AG04449 (cell line): ENCODE measurements at regions of chr5 and their contacts with region 1.

Region 1: GRCh38 chr5:169695919-169696490 is 58.9 kb downstream of the DOCK2 start:
- DNase-seq: peak; percentile 98
- H3K4me3 ChIP-seq: no peak overlapping the region
- CTCF ChIP-seq: no peak

Region 2: GRCh38 chr5:169656125-169656901 is 39.7 kb before region 1 on chr5:
- CTCF ChIA-PET with region 1: no interaction called
- POLR2A ChIA-PET with region 1: no interaction called
- DNase-seq: no peak
- H3K4me3 ChIP-seq: no peak overlapping the region
- CTCF ChIP-seq: no peak

Region 3: DNA sequence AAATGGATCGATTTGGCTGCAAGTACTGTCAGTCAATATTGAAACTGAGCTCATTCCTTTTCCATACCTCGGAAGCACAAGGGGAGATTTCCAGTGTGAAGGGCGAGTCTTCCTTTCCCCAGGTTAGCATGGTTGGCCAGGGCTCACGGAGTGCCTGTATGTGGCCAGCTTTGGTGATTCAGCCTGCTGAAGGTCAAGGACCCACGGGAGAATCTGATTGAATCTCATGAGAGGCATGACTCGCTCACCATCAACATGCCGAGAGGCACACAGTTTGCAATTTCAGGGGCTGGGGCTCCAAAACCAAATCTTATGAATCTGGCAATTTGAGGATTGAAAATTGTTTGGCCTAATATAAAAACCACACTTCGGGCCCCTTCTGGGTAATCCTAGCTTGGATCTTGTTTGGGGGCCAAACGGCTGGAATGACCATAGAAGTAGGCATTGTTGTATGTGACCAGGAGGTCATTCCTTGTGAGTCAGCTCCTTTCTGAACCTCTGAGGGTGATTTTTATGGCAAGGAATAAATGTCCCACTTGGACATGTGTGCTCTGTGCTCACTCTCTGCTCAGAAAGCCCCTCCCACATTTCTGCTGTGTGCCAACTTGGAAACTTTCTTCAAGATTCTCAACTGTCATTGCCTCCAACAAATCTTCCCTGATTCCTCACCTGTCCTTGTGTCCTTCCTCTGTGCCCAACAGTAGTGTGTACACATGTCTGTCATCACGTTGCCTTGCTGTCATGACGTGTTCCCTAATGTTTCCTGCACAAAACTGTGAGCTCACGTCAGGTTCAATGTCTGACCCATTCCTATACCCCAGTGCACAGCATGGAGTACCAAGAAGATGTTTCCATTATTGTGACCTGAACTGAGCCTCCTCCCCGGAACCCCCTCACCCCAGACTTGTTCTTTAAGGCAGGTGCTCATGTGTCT is 11.0 kb after region 1 on chr5:
- CTCF ChIA-PET with region 1: interaction called, 20 read pairs
- POLR2A ChIA-PET with region 1: interaction called, 12 read pairs
- DNase-seq: no peak
- H3K4me3 ChIP-seq: no peak overlapping the region
- CTCF ChIP-seq: no peak

Region 4: GRCh38 chr5:169805527-169805934 is 109.5 kb after region 1 on chr5:
- CTCF ChIA-PET with region 1: interaction called, 20 read pairs
- POLR2A ChIA-PET with region 1: interaction called, 16 read pairs
- DNase-seq: no peak
- H3K4me3 ChIP-seq: no peak overlapping the region
- CTCF ChIP-seq: no peak